Calu3 (cell line): ENCODE measurements at regions of chr13 and their contacts with region 1.

Region 1: GRCh38 chr13:46603165-46603603 is 50.2 kb downstream of the LRCH1 start:
- DNase-seq: no peak
- H3K4me3 Mint-ChIP-seq: no peak overlapping the region
- H3K27ac Mint-ChIP-seq: no peak overlapping the region
- H3K4me1 Mint-ChIP-seq: peaks cover 58% of the 10 kb centered on the region
- H3K27me3 Mint-ChIP-seq: no peaks in the 10 kb centered on the region
- CTCF ChIP-seq: peak; percentile 22

Region 2: DNA sequence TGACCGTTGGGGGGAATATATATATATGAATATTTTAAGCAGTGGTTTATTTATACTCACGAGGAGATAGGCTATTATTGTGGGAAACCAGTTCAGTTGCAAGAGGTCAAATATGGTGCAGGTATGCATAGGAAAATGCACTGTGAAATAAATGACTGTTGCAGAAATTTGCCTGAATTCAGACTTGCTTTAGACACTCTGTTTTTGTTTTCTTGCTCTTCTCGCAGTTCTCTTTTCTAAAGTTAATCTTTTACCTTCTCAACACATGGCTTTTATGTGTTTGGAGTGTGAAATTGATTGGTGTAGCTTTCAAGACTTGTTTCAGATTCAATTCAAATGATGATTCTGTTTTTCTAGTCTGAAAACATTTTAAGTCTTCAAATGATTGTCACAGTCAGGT is 59.5 kb after region 1 on chr13:
- CTCF ChIA-PET with region 1: no interaction called
- intact Hi-C with region 1: loop called (anchors 5 kb)
- DNase-seq: no peak
- H3K4me3 Mint-ChIP-seq: peak overlapping the region; percentile 4
- H3K27ac Mint-ChIP-seq: peak overlapping the region; percentile 79
- H3K4me1 Mint-ChIP-seq: peaks cover 59% of the 10 kb centered on the region
- H3K27me3 Mint-ChIP-seq: no peaks in the 10 kb centered on the region
- CTCF ChIP-seq: no peak

Region 3: DNA sequence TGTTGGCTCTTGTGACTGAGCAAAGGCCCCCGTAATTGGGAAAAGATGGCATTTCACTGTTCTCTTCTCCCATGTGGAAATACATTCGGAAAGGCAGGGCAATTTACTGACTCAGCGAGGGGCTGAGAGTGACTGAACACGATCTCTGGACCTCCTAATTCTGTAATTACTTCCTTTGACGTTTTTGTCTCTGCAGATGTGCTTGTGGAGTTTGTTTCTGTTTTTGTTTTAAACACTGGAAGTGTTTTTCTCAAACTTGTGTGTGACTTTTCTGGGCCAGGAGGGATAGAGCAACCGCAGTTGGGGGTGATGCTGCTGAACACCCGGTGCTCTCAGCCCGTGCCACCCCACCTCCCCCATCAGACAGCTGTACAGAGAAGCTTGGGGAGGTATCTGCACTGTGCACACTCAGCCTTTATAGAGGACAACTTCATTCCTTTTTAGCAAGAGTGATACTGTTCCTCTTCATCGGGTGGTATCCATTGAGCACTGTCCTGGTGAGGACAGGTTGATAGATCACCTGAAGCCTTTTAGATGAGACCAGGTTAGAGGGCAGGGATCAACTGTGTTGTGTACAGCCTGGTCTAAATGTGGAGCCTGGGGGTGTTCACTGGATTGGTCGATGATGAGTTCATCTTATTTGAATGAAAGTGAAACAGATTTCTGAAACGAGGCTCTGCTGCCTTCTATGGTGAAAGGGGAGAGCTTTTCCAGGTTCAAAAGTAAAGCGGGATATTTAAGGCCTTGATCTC is 76.4 kb after region 1 on chr13:
- CTCF ChIA-PET with region 1: no interaction called
- intact Hi-C with region 1: loop called (anchors 5 kb)
- DNase-seq: no peak
- H3K4me3 Mint-ChIP-seq: no peak overlapping the region
- H3K27ac Mint-ChIP-seq: no peak overlapping the region
- H3K4me1 Mint-ChIP-seq: peaks cover 9% of the 10 kb centered on the region
- H3K27me3 Mint-ChIP-seq: no peaks in the 10 kb centered on the region
- CTCF ChIP-seq: no peak

Region 4: GRCh38 chr13:47004027-47004426 is 400.8 kb after region 1 on chr13:
- CTCF ChIA-PET with region 1: no interaction called
- intact Hi-C with region 1: no loop called
- DNase-seq: no peak
- H3K4me3 Mint-ChIP-seq: no peak overlapping the region
- H3K27ac Mint-ChIP-seq: no peak overlapping the region
- H3K4me1 Mint-ChIP-seq: no peaks in the 10 kb centered on the region
- H3K27me3 Mint-ChIP-seq: no peaks in the 10 kb centered on the region
- CTCF ChIP-seq: no peak